ENCODE measurements at regions of chr12 and their contacts with region 1.

Region 1: DNA sequence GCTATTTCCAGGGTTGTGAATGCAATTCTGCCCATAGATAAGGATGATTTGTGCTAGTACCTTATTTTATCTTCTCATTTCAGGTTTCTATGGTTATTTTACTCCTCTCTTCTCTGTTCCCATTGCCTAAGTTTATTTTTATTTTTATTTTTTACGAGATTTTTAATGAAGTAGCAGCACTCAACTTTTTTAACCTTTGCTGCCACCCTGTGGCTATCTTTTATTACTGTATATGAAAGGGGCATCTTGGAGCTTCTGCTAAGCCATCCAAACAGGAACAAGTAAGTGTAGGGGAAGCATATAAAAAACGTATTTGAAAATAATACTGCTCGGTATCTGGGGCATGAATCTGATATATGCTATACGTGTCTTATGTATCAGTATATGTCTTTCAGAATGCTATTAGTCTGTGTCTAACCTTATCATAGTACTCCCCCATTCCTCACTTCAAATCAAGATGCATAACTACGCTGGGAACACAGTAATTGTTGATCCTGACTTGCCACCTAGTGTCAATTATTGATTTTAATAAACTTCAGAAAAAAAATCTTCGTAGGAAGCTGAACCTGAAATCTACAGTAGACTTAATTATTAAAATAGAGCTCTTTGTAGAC is 60.3 kb downstream of the KLRG1 start:
- DNase-seq: peak in 1 of 7 donors; percentile 35
- H3K4me3 ChIP-seq: no peak overlapping the region
- H3K27ac ChIP-seq: no peak overlapping the region
- H3K4me1 ChIP-seq: no peaks in the 10 kb centered on the region
- H3K27me3 ChIP-seq: no peaks in the 10 kb centered on the region
- CTCF ChIP-seq: peak; percentile 44 to 69 (median 55)
- POLR2A ChIP-seq: no peak

Region 2: GRCh38 chr12:8662593-8662992 is 387.0 kb before region 1 on chr12 and contains the start of gene MFAP5:
- intact Hi-C with region 1: loop called in 1 of 2 experiments (anchors 10 kb)
- DNase-seq: no peak
- H3K4me3 ChIP-seq: no peak within 1 kb of the TSS
- H3K27ac ChIP-seq: peak within 1 kb of the TSS in 1 of 5 donors; percentile 49
- H3K4me1 ChIP-seq: no peaks in the 10 kb centered on the region
- H3K27me3 ChIP-seq: no peaks in the 10 kb centered on the region
- CTCF ChIP-seq: no peak
- POLR2A ChIP-seq: no peak
- total RNA-seq, gene MFAP5: 0.68 to 39.3 (median 11.8) TPM

Region 3: GRCh38 chr12:8687846-8688601 is 361.6 kb before region 1 on chr12:
- intact Hi-C with region 1: loop called in 1 of 2 experiments (anchors 10 kb)
- DNase-seq: peak; percentile 65 to 88 (median 83)
- H3K4me3 ChIP-seq: peak overlapping the region in 1 of 4 donors; percentile 8
- H3K27ac ChIP-seq: peak overlapping the region in 1 of 5 donors; percentile 4
- H3K4me1 ChIP-seq: peaks cover 5 to 18% of the 10 kb centered on the region in 2 donors
- H3K27me3 ChIP-seq: no peaks in the 10 kb centered on the region
- CTCF ChIP-seq: no peak
- POLR2A ChIP-seq: peak in 1 of 2 donors; percentile 60

Region 4: GRCh38 chr12:8844665-8845064 is 205.0 kb before region 1 on chr12:
- intact Hi-C with region 1: no loop called
- DNase-seq: peak; percentile 76 to 90 (median 84)
- H3K4me3 ChIP-seq: peak overlapping the region in 1 of 4 donors; percentile 1
- H3K27ac ChIP-seq: no peak overlapping the region
- H3K4me1 ChIP-seq: peaks cover 0 to 3% of the 10 kb centered on the region in 2 donors
- H3K27me3 ChIP-seq: no peaks in the 10 kb centered on the region
- CTCF ChIP-seq: no peak
- POLR2A ChIP-seq: no peak

Region 5: DNA sequence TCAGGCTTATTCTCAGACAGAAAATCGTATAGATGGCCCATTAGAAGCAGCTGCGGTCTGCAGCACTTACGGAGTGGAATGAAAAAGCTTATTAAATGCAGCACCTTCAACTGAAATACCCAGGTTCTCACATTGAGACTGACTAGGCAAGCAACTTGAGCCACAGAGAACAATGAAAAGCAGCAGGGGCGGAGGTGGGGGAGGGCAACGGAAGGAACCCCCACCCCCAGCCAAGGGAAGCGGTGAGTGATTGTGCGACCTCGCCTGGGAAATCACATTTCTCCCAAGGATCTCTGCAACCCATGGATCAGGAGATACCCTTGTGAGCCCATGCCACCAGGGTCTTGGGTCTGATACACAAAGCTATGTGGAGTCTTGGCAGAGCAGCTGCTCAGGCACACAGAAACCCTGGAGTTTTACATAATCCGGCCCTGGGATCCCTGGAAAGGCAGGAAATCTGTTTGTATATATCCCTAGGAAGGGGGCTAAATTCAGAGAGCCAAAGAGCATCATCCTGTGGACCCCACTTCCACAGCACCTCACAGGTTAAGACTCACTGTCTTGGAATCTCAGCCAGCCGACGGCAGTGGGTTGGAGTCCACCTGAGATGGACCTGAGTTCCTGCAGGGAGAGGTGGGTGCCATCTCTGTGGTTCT is 120.5 kb after region 1 on chr12:
- intact Hi-C with region 1: no loop called
- DNase-seq: peak in 2 of 7 donors; percentile 4 to 57
- H3K4me3 ChIP-seq: no peak overlapping the region
- H3K27ac ChIP-seq: no peak overlapping the region
- H3K4me1 ChIP-seq: no peaks in the 10 kb centered on the region
- H3K27me3 ChIP-seq: no peaks in the 10 kb centered on the region
- CTCF ChIP-seq: no peak
- POLR2A ChIP-seq: no peak